Mammary epithelial cell (primary cell): ENCODE measurements at regions of chr7 and their contacts with region 1.

Region 1: GRCh38 chr7:37141742-37142141 is 306.9 kb downstream of the ELMO1 start:
- DNase-seq: no peak
- H3K4me3 ChIP-seq: no peak overlapping the region
- H3K27ac ChIP-seq: no peak overlapping the region
- H3K4me1 ChIP-seq: no peaks in the 10 kb centered on the region
- H3K27me3 ChIP-seq: no peaks in the 10 kb centered on the region
- CTCF ChIP-seq: peak in 1 of 2 donors; percentile 48

Region 2: DNA sequence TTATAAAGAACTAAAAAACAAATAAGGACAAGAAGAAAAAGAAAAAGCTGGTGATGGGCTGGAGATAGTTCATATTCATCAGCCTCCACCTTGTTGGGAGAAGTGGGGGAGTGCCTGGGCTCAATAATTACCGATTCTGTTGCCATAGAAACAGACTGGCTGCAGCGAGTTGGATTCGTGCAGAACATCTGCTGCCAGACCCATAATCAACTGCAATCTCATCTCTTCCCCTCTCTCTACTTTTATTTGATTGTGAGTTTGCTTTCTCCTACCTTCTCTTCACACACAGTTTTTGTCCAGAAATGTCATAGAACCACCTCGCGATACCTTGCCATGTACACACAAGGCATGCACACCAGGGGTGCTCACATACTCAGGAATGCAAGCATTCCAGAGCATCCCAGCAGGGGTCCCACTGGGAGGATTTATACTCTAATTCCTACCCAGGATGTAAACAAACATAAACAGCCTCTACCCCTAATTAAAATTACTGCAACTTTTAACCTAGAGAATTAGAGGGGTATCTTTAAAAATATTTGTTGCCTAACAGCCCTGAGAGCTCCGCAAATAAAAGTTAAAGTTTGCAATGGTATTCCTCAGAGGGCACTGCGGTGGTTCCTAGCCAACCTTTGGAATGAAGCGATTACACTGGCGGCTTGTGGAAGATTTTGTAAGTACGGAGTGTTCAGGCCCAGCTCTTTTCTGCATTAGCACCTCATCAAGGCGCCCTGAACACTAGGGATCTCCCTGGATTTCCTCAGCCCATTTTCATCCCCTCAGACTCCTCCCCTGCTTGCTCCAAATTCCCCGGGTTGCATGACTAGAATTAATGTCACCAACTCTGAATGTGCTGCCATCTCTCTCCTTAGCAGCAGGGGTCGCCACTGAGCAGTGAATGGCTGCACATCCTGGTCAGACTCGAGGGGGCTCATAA is 155.0 kb before region 1 on chr7:
- CTCF ChIA-PET with region 1: no interaction called
- dilution Hi-C with region 1: no loop called
- in situ Hi-C with region 1: no loop called
- intact Hi-C with region 1: loop called (anchors 1 kb)
- DNase-seq: peak; percentile 41
- H3K4me3 ChIP-seq: no peak overlapping the region
- H3K27ac ChIP-seq: no peak overlapping the region
- H3K4me1 ChIP-seq: no peaks in the 10 kb centered on the region
- H3K27me3 ChIP-seq: no peaks in the 10 kb centered on the region
- CTCF ChIP-seq: peak; percentile 94 to 97

Region 3: GRCh38 chr7:37083311-37084096 is 58.2 kb before region 1 on chr7:
- CTCF ChIA-PET with region 1: no interaction called
- dilution Hi-C with region 1: no loop called
- in situ Hi-C with region 1: no loop called
- intact Hi-C with region 1: no loop called
- DNase-seq: no peak
- H3K4me3 ChIP-seq: no peak overlapping the region
- H3K27ac ChIP-seq: no peak overlapping the region
- H3K4me1 ChIP-seq: no peaks in the 10 kb centered on the region
- H3K27me3 ChIP-seq: peaks cover 6% of the 10 kb centered on the region
- CTCF ChIP-seq: no peak

Region 4: DNA sequence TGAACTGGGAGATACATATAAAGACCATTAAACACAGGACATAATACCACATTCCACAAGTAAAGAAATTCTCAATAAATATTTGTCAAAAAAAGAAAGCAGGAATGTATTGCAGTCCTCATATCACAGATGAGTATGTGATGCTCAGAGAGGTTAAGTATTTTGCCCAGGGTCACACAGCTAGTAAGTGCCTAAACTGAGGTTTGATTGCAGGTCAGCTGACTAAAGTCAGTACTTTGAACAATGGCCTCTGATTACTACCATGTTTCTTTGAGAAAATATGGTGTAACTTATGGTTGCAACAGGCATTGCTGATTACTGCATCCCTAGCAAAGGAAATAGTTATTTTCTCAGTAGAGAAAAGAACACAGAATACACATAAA is 39.8 kb after region 1 on chr7:
- CTCF ChIA-PET with region 1: no interaction called
- dilution Hi-C with region 1: no loop called
- in situ Hi-C with region 1: no loop called
- intact Hi-C with region 1: no loop called
- DNase-seq: no peak
- H3K4me3 ChIP-seq: no peak overlapping the region
- H3K27ac ChIP-seq: no peak overlapping the region
- H3K4me1 ChIP-seq: no peaks in the 10 kb centered on the region
- H3K27me3 ChIP-seq: no peaks in the 10 kb centered on the region
- CTCF ChIP-seq: no peak

Region 5: GRCh38 chr7:37193087-37193774 is 51.5 kb after region 1 on chr7:
- CTCF ChIA-PET with region 1: no interaction called
- dilution Hi-C with region 1: no loop called
- in situ Hi-C with region 1: no loop called
- intact Hi-C with region 1: no loop called
- DNase-seq: no peak
- H3K4me3 ChIP-seq: no peak overlapping the region
- H3K27ac ChIP-seq: no peak overlapping the region
- H3K4me1 ChIP-seq: no peaks in the 10 kb centered on the region
- H3K27me3 ChIP-seq: no peaks in the 10 kb centered on the region
- CTCF ChIP-seq: no peak